Head of caudate nucleus (tissue), 42 donors: ENCODE measurements at regions of chr5 and their contacts with region 1.

Region 1: DNA sequence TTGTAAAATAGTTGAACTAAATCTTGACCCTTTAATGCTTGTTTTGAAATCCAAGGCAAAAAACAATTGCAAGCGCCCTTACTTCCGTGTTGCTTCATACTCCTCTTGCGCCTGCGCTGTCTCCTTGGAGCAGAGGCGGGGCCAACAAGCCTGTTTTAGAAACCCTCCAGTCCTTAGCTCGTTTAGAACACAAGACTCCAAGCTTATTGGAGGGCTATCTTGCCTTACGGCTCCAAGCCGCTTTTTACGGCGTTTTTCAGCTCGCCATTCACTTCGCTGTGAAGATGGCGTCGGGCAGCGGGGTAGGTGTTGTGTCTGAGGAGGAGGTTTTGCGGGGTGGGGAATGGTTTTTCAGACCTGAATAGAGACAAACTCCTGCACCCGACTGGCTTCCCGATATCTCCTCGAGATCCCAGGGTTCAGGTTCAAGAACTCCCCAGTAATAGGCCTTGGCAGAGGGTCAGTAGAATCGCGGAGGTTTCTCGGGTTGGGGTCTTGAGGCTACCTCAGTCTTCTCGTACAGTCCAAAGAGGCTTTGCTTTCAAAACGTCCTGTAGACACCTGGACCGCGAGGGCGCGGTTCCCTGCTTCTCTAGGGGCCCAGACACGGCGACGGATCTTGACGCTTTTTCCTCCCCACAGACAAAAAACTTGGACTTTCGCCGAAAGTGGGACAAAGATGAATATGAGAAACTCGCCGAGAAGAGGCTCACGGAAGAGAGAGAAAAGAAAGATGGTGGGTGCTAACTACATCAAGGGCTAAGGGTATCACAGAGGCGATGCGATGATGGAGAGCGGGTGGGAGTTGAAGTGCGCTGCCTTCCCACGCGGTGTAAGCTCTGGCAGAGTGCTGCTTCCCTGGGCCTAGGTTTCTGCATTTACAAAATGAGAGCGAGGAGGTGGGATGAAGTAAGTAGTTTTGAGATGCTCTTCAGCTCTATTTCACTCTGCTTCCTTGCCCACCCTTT is at the start of gene ZMAT2:
- DNase-seq: peak; percentile 87 to 99 (median 98)

Region 2: DNA sequence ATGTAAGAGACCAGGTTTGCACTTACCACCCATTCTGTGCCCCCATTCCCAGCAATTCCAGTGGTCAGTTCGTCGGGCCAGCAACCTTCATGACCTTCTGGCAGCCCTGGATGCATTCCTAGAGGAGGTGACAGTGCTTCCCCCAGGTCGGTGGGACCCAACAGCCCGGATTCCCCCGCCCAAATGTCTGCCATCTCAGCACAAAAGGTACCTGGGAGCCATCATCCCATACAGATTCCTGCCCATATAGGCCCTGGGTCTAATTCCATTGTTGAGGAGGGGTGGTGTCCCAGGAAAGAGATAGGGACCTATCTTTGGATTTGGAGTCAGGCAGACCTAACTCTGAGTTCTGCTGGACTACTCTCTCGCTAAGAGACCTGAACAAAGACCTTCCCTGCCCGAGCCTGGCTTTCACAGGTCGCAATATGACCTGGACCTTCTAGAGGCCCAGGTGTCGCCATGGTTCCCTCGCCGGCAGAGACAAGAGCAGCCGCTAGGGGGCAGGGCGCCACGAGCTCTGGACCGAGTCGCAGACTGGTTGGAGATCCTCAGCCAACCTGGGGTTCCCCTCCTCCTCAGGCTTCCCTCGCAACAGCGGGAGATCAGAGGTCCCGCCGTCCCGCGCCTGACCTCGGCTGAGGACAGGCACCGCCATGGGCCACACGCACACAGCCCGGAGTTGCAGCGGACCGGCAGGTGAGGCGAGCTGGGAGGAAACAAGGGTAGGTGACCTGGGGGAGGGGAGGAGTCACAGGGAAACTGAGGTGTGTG is 337.4 kb before region 1 on chr5:
- intact Hi-C with region 1: loop called (anchors 10 kb)
- DNase-seq: peak; percentile 60 to 93 (median 84)

Region 3: DNA sequence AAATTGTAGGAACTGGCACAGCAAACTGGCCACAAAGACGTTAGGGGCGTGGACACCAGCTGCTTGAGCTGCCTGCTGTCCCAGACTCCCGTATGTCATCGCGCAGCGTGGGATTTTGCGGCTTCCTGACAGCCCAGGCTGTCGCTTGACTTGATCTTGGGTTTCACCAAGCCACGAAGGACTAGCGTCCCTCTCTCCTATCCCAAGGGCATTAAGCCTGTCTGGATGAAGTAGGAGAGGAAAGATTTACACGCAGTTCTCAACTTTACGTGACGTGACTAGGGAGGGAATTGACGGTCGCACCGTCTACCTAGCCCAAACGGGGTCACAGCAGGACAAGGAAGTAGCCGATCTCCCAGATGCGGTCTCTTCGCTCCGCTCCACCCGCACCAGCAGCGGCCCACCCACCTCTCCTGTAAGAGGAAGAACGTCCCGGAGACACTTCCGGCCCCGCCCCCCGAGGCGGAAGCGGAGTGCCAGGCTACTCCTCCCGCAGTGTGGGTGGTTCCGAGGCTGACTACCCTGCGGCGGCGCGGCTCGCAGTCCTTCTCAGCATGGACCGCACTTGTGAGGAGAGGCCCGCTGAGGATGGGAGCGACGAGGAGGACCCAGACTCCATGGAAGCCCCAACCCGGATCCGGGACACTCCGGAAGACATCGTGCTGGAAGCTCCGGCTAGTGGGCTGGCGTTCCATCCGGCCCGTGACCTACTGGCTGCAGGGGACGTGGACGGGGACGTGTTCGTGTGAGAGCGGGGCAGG is 35.9 kb before region 1 on chr5 and contains the start of gene WDR55:
- intact Hi-C with region 1: loop called (anchors 5 kb)
- DNase-seq: peak; percentile 94 to 99 (median 97)